ENCODE measurements at regions of chr1 and their contacts with region 1.

Region 1: GRCh38 chr1:41622859-41623723 is 138.6 kb upstream of the EDN2 start:
- DNase-seq: no peak
- ATAC-seq: no peak
- H3K4me3 ChIP-seq: no peak overlapping the region
- H3K27ac ChIP-seq: no peak overlapping the region
- H3K4me1 ChIP-seq: peaks cover 15% of the 10 kb centered on the region
- H3K27me3 ChIP-seq: no peaks in the 10 kb centered on the region
- CTCF ChIP-seq: no peak

Region 2: GRCh38 chr1:41661427-41662060 is 38.5 kb after region 1 on chr1:
- intact Hi-C with region 1: no loop called
- DNase-seq: peak in 1 of 2 donors; percentile 31
- ATAC-seq: peak; percentile 5 to 23 (median 14)
- H3K4me3 ChIP-seq: peak overlapping the region; percentile 74
- H3K27ac ChIP-seq: peak overlapping the region; percentile 16
- H3K4me1 ChIP-seq: peaks cover 17% of the 10 kb centered on the region
- H3K27me3 ChIP-seq: no peaks in the 10 kb centered on the region
- CTCF ChIP-seq: no peak

Region 3: DNA sequence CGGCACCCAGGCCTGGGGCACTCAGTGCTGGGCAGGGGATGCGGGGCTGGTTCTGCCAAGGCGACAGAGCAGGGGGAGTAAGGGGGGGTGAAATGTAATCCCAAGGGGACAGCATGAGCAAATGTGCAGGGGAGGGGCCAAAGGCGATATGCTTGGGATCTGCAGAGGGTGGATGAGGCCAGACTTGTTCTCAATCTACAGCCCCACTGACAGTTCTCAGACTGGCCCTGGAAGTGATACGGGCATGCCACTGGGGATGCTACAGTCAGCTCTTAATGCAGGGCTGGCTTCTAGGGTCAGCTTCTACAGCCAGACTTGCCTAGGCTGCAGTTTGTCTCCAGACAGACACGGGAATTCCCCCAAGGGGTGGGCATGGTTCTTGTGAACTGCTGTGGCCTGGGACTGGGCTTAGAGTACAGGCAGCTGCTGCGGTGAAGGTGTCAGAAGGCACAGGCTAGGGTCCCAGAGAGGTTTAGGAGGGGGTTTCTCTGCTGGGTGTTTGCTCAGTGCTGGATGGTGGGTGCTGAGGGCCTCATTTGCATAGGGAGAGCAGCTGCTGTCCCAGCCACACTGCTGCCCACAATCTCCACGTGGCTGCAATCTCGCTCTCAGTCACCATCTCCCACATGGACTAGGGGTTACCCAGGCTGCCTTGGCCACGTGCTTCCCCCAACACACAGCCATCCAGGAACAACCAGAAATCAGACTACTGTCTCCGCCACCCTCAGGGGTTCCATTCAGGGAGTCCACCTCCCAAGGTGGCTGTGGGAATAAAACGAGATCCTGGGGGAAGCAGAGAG is 105.5 kb after region 1 on chr1:
- intact Hi-C with region 1: no loop called
- DNase-seq: no peak
- ATAC-seq: peak in 3 of 4 donors; percentile 55 to 67 (median 61)
- H3K4me3 ChIP-seq: no peak overlapping the region
- H3K27ac ChIP-seq: no peak overlapping the region
- H3K4me1 ChIP-seq: peaks cover 26% of the 10 kb centered on the region
- H3K27me3 ChIP-seq: no peaks in the 10 kb centered on the region
- CTCF ChIP-seq: no peak

Region 4: GRCh38 chr1:43024905-43025304 is 1401.8 kb after region 1 on chr1:
- intact Hi-C with region 1: loop called in 1 of 2 experiments (anchors 5 kb)
- DNase-seq: no peak
- ATAC-seq: no peak
- H3K4me3 ChIP-seq: no peak overlapping the region
- H3K27ac ChIP-seq: no peak overlapping the region
- H3K4me1 ChIP-seq: no peaks in the 10 kb centered on the region
- H3K27me3 ChIP-seq: peaks cover 0 to 18% (median 6%) of the 10 kb centered on the region in 3 donors
- CTCF ChIP-seq: no peak